ENCODE measurements at regions of chr14 and their contacts with region 1.

Region 1: DNA sequence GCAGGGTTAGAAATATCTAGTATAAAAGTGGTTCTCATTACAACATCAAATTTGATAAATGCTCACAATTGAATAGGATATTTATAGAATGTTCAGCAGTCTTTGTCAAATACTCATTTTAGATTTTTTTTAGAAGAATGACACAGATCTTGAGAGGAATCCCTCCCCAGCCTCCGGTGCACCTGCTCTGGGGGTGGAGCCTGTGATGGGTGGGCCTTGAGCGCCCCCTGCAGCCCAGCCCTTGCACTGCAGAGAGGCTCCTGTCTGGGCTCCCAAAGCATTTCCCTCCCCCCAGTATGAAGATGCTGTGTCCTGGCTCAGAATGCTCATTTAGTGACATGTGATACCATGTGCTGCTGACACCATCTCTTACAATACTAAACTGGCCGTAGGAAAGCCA is 792.3 kb downstream of the TMEM121 start:
- DNase-seq: no peak
- ATAC-seq: peak; percentile 79
- H3K4me3 ChIP-seq: no peak overlapping the region
- H3K27ac ChIP-seq: no peak overlapping the region
- H3K4me1 ChIP-seq: no peaks in the 10 kb centered on the region; the same call in 1 of the 2 replicates
- H3K27me3 ChIP-seq: no peaks in the 10 kb centered on the region
- CTCF ChIP-seq: peak; percentile 59 to 89 (median 87)
- EP300 ChIP-seq: no peak
- POLR2A ChIP-seq: no peak
- RAD21 ChIP-seq: 0 out of 2 replicates have a peak, but pooled peaks have one; percentile 13

Region 2: GRCh38 chr14:106248321-106249192 is 70.1 kb before region 1 on chr14:
- CTCF ChIA-PET with region 1: no interaction called
- POLR2A ChIA-PET with region 1: no interaction called
- RAD21 ChIA-PET with region 1: no interaction called
- SMC1A ChIA-PET with region 1: no interaction called
- in situ Hi-C with region 1: no loop called
- intact Hi-C with region 1: no loop called
- DNase-seq: no peak
- ATAC-seq: no peak
- H3K4me3 ChIP-seq: no peak overlapping the region
- H3K27ac ChIP-seq: no peak overlapping the region
- H3K4me1 ChIP-seq: no peaks in the 10 kb centered on the region
- H3K27me3 ChIP-seq: no peaks in the 10 kb centered on the region
- CTCF ChIP-seq: no peak
- EP300 ChIP-seq: no peak
- POLR2A ChIP-seq: no peak
- RAD21 ChIP-seq: no peak

Region 3: DNA sequence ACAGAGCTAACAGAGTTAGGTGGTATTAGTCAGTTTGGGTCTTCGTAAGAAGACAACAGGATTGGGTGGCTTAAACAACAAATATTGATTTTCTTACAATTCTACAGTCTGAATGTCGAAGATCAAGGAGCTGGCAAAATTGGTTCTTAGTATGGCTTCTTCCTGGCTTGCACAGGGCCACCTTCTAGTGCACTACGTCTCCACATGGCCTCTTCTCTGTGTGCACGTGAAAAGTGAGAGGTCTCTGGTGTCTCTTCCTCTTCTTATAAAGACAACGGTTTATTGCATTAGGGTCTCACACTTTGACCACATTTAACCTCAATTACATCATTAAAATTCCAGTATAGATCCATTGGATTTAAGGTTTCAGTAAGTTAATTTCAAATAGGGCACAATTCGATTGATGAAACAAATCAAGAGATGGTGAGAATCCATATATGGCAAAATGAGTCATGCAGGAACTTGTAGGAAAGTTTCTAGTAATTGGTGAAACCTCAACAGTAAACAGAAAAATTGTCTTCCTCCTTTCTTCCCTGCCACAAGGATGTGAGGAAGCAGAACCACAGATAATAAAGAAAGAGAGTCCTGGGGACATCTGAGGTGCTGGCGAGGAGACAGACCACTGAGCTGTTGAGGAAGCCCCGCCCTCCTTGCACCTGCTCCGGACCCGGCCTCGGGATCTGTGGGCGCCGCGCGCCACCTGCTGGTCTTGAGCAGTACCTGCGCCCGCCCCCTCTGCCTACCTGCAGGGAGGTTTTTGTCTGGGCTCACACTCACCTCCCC is 54.4 kb after region 1 on chr14:
- CTCF ChIA-PET with region 1: interaction called, 25 read pairs
- POLR2A ChIA-PET with region 1: no interaction called
- RAD21 ChIA-PET with region 1: interaction called, 11 read pairs
- SMC1A ChIA-PET with region 1: interaction called, 5 read pairs
- in situ Hi-C with region 1: no loop called
- intact Hi-C with region 1: no loop called
- DNase-seq: no peak
- ATAC-seq: peak; percentile 99
- H3K4me3 ChIP-seq: no peak overlapping the region
- H3K27ac ChIP-seq: no peak overlapping the region
- H3K4me1 ChIP-seq: peaks cover 6% of the 10 kb centered on the region; the same call in 1 of the 2 replicates
- H3K27me3 ChIP-seq: no peaks in the 10 kb centered on the region; a peak in 2 of 4 replicates
- CTCF ChIP-seq: peak; percentile 86 to 93 (median 89)
- EP300 ChIP-seq: 0 out of 4 replicates have a peak, but pooled peaks of 1 of the 2 experiments have one; percentile 9
- POLR2A ChIP-seq: no peak
- RAD21 ChIP-seq: peak; percentile 88